IMR-90 (cell line): ENCODE measurements at regions of chr4 and their contacts with region 1.

Region 1: GRCh38 chr4:75490155-75490554 is 24.0 kb downstream of the RCHY1 start:
- DNase-seq: peak; percentile 65
- ATAC-seq: 0 out of 2 replicates have a peak, but pooled peaks have one; percentile 49
- H3K4me3 ChIP-seq: no peak overlapping the region
- H3K27ac ChIP-seq: no peak overlapping the region
- H3K4me1 ChIP-seq: no peaks in the 10 kb centered on the region
- H3K27me3 ChIP-seq: no peaks in the 10 kb centered on the region
- CTCF ChIP-seq: peak; percentile 50
- POLR2A ChIP-seq: no peak
- RAD21 ChIP-seq: peak; percentile 53

Region 2: GRCh38 chr4:73499996-73500765 is 1990.0 kb before region 1 on chr4:
- CTCF ChIA-PET with region 1: no interaction called
- POLR2A ChIA-PET with region 1: no interaction called
- dilution Hi-C with region 1: no loop called
- in situ Hi-C with region 1: no loop called
- intact Hi-C with region 1: no loop called
- DNase-seq: peak; percentile 3
- ATAC-seq: peak; percentile 56; the same call in 1 of the 2 replicates
- H3K4me3 ChIP-seq: no peak overlapping the region
- H3K27ac ChIP-seq: no peak overlapping the region
- H3K4me1 ChIP-seq: no peaks in the 10 kb centered on the region
- H3K27me3 ChIP-seq: no peaks in the 10 kb centered on the region; the same call in 1 of the 2 replicates
- CTCF ChIP-seq: no peak
- POLR2A ChIP-seq: no peak
- RAD21 ChIP-seq: no peak

Region 3: DNA sequence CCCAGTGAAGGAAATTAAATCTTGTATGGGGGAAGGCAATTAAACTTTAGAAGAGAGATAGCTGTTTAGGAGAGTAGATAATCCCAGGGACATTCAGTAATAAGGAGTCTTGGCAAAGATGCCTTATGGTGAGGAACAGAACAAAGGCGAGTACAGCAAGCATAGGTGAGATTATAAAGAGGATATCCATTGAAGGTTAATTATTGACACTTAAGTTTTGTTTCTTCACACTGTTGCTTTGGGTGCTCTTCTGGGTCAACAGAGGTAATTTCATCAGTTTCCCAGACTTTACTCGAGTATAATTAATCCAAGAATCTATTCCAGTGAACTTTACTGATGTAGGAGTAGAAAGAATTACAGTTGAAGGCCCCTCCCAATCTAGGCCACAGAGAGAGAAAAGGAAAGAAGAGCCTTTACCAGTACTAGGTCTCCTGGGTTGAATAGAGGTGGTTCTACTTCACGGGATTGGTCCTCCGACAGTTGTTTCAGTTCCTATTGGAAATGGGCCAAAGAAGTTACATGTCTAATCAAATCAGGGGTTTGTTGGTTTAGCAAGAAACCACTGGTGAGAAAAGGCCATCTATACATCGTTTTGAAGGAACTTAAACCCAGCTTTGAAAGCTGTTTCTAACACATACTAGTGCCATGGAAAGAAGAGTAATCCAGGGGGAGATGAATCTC is 1154.7 kb before region 1 on chr4:
- CTCF ChIA-PET with region 1: no interaction called
- POLR2A ChIA-PET with region 1: no interaction called
- dilution Hi-C with region 1: no loop called
- in situ Hi-C with region 1: loop called (anchors 25 kb)
- intact Hi-C with region 1: no loop called
- DNase-seq: no peak
- ATAC-seq: no peak
- H3K4me3 ChIP-seq: no peak overlapping the region
- H3K27ac ChIP-seq: no peak overlapping the region
- H3K4me1 ChIP-seq: no peaks in the 10 kb centered on the region
- H3K27me3 ChIP-seq: no peaks in the 10 kb centered on the region
- CTCF ChIP-seq: no peak
- POLR2A ChIP-seq: no peak
- RAD21 ChIP-seq: no peak

Region 4: GRCh38 chr4:74874753-74875367 is 615.3 kb before region 1 on chr4:
- CTCF ChIA-PET with region 1: no interaction called
- POLR2A ChIA-PET with region 1: no interaction called
- dilution Hi-C with region 1: no loop called
- in situ Hi-C with region 1: no loop called
- intact Hi-C with region 1: loop called (anchors 1 kb)
- DNase-seq: peak; percentile 84
- ATAC-seq: peak; percentile 96
- H3K4me3 ChIP-seq: no peak overlapping the region
- H3K27ac ChIP-seq: no peak overlapping the region
- H3K4me1 ChIP-seq: no peaks in the 10 kb centered on the region
- H3K27me3 ChIP-seq: peaks cover 3% of the 10 kb centered on the region; the same call in 1 of the 2 replicates
- CTCF ChIP-seq: peak; percentile 86
- POLR2A ChIP-seq: no peak
- RAD21 ChIP-seq: peak; percentile 68

Region 5: DNA sequence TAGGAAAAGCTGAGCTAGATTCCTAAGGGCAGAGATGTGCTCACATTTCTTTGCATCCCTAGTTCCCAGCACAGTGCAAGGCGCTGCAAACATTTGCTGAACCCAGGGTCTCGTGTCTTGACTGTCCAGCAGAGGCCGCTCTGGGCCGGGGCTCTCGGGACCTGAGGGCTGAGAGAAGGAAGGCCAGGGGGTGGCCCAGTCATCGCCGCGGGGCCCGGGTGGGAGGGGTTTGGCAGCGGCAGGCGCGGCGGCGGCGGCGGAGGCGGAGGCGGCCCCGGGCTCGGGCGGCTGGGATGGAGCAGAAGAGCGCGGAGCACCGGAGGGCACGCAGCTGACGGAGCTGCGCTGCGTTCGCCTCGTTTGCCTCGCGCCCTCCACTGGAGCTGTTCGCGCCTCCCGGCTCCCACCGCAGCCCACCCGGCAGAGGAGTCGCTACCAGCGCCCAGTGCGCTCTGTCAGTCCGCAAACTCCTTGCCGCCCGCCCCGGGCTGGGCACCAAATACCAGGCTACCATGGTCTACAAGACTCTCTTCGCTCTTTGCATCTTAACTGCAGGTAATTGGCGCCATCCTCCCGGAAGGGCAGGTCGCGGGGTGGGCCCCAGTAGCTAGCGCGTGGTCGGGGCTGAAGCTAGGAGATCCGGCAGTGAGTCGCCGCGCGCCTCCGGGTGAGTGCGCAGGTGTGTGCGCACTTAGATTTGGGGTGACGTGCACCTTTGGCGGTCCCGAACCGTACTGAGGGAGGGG is 557.2 kb before region 1 on chr4 and contains the start of gene PARM1:
- CTCF ChIA-PET with region 1: interaction called, 3 read pairs
- POLR2A ChIA-PET with region 1: no interaction called
- dilution Hi-C with region 1: no loop called
- in situ Hi-C with region 1: no loop called
- intact Hi-C with region 1: loop called (anchors 1 kb)
- DNase-seq: peak; percentile 61
- ATAC-seq: peak; percentile 98
- H3K4me3 ChIP-seq: peak within 1 kb of the TSS; percentile 40
- H3K27ac ChIP-seq: no peak within 1 kb of the TSS
- H3K4me1 ChIP-seq: no peaks in the 10 kb centered on the region
- H3K27me3 ChIP-seq: peaks cover 41% of the 10 kb centered on the region
- CTCF ChIP-seq: peak; percentile 68
- POLR2A ChIP-seq: no peak
- RAD21 ChIP-seq: peak; percentile 73
- total RNA-seq, gene PARM1: under 0.01 and 0.18 TPM in 2 replicates

Region 6: DNA sequence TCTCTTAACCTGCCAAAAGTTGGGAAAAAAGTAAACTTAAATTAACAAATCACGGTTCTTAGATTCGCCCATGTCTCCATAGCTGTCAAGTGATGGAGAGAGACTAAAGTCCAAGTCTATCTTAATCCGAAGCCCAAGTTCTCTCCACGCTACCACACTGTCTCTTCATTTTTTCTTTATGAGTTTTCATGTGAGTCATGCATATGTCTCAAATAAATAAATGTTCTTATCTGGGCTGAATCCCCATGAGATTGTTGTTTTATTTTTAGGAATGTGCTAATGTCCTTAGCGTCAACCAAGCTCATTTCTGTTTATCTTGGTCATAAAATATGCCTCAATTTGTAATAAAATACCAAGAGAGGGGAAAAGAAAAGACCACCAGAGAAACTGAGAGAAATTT is 145.2 kb before region 1 on chr4:
- CTCF ChIA-PET with region 1: no interaction called
- POLR2A ChIA-PET with region 1: no interaction called
- dilution Hi-C with region 1: no loop called
- in situ Hi-C with region 1: no loop called
- intact Hi-C with region 1: loop called (anchors 10 kb)
- DNase-seq: peak; percentile 92
- ATAC-seq: peak; percentile 88
- H3K4me3 ChIP-seq: no peak overlapping the region
- H3K27ac ChIP-seq: peak overlapping the region; percentile 42; the same call in 1 of the 2 replicates
- H3K4me1 ChIP-seq: peaks cover 13% of the 10 kb centered on the region
- H3K27me3 ChIP-seq: no peaks in the 10 kb centered on the region
- CTCF ChIP-seq: no peak
- POLR2A ChIP-seq: no peak
- RAD21 ChIP-seq: no peak

Region 7: GRCh38 chr4:75698162-75698962 is 208.2 kb after region 1 on chr4:
- CTCF ChIA-PET with region 1: no interaction called
- POLR2A ChIA-PET with region 1: no interaction called
- dilution Hi-C with region 1: no loop called
- in situ Hi-C with region 1: no loop called
- intact Hi-C with region 1: no loop called
- DNase-seq: no peak
- ATAC-seq: no peak
- H3K4me3 ChIP-seq: no peak overlapping the region
- H3K27ac ChIP-seq: no peak overlapping the region
- H3K4me1 ChIP-seq: no peaks in the 10 kb centered on the region
- H3K27me3 ChIP-seq: no peaks in the 10 kb centered on the region
- CTCF ChIP-seq: no peak
- POLR2A ChIP-seq: no peak
- RAD21 ChIP-seq: no peak

Region 8: DNA sequence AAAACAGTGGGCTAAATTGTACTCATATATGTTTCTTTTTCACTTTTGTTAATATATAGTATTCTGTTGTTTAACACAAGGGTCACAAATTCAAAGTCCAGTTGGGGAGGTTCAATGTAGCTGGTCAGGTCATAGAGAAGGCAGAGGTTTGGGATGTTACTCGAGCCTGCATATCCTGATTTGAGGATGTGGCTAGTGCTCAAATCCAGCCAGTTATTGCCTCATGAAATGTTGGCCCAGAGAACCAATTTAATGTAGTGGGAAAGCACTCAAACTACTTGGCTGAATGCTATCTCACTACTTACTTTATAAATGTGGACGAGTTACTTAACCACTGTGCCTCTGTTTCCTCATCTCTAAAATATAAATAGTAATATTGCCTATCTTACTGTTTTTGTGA is 246.7 kb after region 1 on chr4:
- CTCF ChIA-PET with region 1: no interaction called
- POLR2A ChIA-PET with region 1: no interaction called
- dilution Hi-C with region 1: no loop called
- in situ Hi-C with region 1: no loop called
- intact Hi-C with region 1: no loop called
- DNase-seq: peak; percentile 20
- ATAC-seq: no peak
- H3K4me3 ChIP-seq: no peak overlapping the region
- H3K27ac ChIP-seq: no peak overlapping the region
- H3K4me1 ChIP-seq: peaks cover 2% of the 10 kb centered on the region; the same call in 1 of the 2 replicates
- H3K27me3 ChIP-seq: no peaks in the 10 kb centered on the region
- CTCF ChIP-seq: no peak
- POLR2A ChIP-seq: no peak
- RAD21 ChIP-seq: no peak